ENCODE measurements at regions of chr1 and their contacts with region 1.

Region 1: DNA sequence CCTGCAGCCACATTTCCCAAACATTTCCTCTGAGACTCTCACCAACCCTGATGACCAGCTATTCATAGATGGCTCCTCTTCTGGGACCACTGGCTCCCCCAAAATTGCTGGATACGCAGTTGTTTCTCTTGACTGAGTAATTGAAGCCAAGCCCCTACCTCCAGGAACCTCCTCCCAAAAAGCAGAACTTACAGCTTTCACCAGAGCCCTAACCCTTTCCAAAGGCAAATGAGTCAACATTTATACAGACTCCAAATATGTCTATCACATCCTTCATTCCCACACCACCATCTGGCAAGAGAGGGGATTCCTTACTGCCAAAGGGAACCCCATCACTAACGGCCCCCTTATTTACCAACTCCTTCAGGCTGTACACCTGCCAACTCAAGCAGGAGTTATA is 20.3 kb upstream of the CA6 start:
- DNase-seq: no peak
- ATAC-seq: no peak

Region 2: GRCh38 chr1:8962812-8963530 is 37.6 kb after region 1 on chr1:
- intact Hi-C with region 1: no loop called
- DNase-seq: peak; percentile 28
- ATAC-seq: peak in 1 of 2 donors; percentile 54

Region 3: DNA sequence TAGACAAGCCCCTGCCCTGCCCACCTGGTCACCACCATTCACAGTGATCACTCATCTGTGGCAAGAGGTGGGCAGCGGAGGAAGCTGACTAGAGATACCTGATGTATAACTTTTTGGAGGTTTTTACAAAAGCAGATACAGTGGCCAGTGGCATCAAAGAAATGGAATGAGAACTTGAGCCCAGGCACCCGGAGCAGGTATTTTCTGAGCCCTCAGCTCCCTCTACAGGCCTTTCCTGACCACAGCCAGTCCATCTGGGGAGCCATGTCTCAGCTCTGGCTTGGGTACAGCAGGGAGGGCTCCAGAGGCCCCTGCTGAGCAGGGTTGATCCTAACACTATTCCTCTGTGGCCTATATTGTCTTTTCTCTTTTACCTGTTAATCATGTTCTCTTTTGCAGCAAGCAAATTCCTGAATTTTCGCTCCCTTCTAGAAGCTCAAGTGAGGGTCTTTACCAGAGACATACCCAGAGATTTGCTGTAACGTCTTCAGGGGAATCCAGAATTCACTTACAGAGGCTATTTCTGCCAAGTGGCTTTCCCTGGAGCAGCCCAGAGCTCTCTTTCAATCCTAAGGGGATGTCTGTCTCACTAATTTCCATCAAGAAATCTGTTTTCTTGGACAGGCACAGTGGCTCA is 176.2 kb after region 1 on chr1:
- intact Hi-C with region 1: loop called in 1 of 2 experiments (anchors 10 kb)
- DNase-seq: no peak
- ATAC-seq: peak; percentile 66 to 68

Region 4: DNA sequence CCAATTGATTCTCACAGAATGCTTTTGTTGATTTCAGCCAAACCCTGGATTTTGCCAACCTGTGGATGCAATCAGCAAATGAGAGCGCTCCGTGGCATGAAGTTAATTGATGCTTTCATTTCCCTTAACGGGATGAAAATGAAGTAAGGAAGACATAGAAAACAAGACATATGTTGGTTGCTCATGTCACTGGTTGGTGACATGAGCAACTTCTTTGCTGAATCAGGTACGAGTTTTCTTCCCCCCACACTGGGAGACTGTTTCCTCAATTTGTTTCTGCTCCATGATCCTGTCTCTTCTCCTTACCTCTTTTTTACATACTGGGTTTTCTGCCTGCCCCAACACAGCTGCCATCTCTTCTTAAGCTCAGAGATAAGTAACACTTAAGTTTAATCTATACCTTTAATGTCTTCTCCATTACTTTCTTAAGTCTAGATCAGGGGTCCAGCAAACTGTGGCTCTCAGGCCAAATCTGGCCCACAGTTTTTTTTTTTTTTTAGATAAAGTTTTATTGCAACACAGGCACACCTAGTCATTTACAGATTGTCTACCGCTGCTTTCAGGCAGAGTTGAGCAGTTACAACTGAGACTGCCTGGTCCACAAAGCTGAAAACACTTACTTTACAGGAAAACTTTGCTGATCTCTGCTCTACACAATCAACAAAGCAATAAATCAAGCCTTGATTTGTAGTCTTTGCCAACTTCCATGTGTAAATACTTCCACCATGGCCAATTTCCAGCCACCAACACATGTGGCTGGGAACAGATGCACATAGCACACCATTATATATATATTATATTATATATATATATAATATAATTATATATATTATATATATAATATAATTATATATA is 190.2 kb after region 1 on chr1:
- intact Hi-C with region 1: no loop called
- DNase-seq: peak; percentile 1
- ATAC-seq: no peak

Measured in left cardiac atrium (tissue), 4 donors.